Calu3 (cell line): ENCODE measurements at regions of chr6 and their contacts with region 1.

Region 1: DNA sequence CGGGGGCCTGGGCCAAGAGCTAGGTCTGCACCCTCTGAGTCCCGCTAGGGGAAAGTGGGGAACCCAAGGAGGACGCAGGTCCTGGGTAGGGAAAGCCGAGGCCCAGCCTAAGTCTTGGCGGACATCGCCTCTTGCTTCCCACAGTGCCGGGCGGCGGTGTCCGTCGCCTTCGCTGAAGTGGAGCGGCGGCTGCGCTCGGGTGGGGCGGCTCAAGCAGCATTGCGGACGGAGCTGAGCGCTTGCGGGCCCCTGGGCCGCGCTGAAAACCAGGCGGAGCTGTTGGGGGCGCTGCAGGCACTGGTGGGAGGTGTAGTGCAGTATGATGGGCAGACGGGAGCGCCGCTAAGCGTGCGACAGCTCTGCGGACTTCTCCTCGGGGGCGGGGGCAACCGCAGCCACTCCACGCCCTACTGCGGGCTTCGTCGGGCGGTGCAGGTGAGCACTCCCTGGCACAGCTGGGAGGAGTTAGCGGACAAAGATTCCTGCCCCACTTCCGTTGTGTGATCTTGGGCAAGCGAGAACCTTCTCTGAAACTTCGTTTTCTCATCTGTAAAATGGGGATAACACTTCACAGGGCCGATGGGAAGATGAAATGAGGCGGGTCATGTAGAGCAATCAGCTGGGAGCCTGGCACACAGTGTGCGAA is 4.2 kb downstream of the PRSS16 start:
- DNase-seq: peak; percentile 97
- H3K4me3 Mint-ChIP-seq: peak overlapping the region; percentile 81
- H3K27ac Mint-ChIP-seq: peak overlapping the region; percentile 65
- H3K4me1 Mint-ChIP-seq: peaks cover 14% of the 10 kb centered on the region
- H3K27me3 Mint-ChIP-seq: no peaks in the 10 kb centered on the region
- CTCF ChIP-seq: peak; percentile 48

Region 2: GRCh38 chr6:27237089-27237803 is 14.5 kb before region 1 on chr6:
- CTCF ChIA-PET with region 1: interaction called, 8 read pairs
- intact Hi-C with region 1: loop called (anchors 1 kb)
- DNase-seq: peak; percentile 69
- H3K4me3 Mint-ChIP-seq: peak overlapping the region; percentile 20
- H3K27ac Mint-ChIP-seq: peak overlapping the region; percentile 50
- H3K4me1 Mint-ChIP-seq: peaks cover 39% of the 10 kb centered on the region
- H3K27me3 Mint-ChIP-seq: peaks cover 2% of the 10 kb centered on the region
- CTCF ChIP-seq: no peak